Dorsolateral prefrontal cortex (tissue), 120 donors: ENCODE measurements at regions of chr17 and their contacts with region 1.

Region 1: DNA sequence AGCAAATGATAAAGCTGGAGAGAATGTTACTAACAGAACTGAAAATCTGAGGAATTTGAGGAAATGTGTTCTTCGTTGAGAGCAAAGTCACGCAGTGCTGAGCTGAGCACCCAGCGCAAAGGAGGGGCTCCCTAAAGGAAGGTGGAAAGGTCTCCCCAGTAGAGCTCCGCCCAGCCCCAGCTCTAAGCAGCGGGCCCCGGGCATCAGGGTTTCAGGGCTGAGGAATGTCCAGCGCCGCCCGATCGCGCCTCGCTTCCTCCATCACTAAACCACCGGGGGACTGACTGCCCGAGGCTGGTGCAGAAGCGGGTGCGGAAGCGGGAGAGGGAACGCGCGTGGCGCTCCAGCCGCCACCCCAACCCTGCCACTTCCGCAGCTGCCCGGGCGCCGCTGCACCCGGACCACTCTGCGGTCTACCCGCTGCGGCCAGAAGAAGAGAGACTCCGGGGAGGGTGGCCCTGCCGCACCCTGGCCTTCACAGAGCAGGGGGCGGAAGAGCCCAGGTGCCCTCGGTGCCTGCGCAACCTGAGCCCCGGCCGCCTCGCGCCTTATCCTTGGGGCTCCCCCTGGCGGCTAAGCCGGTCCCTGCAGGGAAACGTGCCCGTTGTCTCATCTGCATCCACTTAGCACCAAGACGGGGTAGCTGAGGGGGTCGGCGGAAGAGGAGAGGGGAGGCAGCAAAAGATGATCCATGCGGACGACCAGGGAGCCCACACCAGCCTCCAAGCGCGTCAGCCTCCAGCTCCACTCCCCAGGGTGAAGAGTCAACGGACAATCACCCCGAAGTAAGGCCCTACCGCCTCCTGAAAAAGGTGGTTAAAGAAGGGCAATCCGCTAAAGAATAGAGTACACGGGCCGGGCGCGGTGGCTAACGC is 12.4 kb upstream of the GUCY2D start:
- DNase-seq: peak; percentile 66 to 89 (median 86)
- H3K4me3 ChIP-seq: peak overlapping the region; percentile 49 to 88 (median 67)
- H3K27ac ChIP-seq: peak overlapping the region in 55 of 59 donors; percentile 8 to 91 (median 79)
- H3K27me3 ChIP-seq: peaks cover 0 to 4% (median 0%) of the 10 kb centered on the region in 45 donors
- CTCF ChIP-seq: peak in 55 of 56 donors; percentile 83 to 99 (median 95)

Region 2: DNA sequence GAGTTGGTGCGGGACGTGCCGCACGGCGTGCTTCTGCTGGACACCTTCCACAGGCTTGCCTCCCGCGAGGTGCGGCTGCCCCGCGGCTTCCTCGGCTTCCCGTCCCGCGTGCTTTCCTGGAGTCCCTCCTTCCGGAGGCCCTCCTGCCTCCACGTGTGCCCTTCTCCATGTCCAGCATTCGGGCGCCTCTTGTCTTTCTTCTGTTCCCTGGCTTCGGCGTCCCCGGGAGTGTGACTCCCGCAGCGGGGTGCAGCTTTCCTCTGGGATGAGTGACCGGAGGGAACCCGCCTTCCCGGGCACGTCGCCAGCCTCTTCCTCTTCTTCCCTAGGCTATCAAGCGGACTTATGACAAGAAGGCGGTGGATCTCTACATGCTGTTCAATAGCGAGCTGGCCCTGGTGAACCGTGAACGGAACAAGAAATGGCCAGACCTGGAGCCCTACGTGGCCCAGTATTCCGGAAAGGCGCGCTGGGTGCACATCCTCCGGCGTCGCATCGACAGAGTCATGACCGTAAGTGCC is 249.5 kb before region 1 on chr17:
- intact Hi-C with region 1: loop called in 1 of 2 experiments (anchors 5 kb)
- DNase-seq: no peak
- H3K4me3 ChIP-seq: peak overlapping the region in 12 of 59 donors; percentile 2 to 47 (median 18)
- H3K27ac ChIP-seq: no peak overlapping the region
- H3K27me3 ChIP-seq: peaks cover 0 to 7% (median 0%) of the 10 kb centered on the region in 45 donors
- CTCF ChIP-seq: no peak

Region 3: DNA sequence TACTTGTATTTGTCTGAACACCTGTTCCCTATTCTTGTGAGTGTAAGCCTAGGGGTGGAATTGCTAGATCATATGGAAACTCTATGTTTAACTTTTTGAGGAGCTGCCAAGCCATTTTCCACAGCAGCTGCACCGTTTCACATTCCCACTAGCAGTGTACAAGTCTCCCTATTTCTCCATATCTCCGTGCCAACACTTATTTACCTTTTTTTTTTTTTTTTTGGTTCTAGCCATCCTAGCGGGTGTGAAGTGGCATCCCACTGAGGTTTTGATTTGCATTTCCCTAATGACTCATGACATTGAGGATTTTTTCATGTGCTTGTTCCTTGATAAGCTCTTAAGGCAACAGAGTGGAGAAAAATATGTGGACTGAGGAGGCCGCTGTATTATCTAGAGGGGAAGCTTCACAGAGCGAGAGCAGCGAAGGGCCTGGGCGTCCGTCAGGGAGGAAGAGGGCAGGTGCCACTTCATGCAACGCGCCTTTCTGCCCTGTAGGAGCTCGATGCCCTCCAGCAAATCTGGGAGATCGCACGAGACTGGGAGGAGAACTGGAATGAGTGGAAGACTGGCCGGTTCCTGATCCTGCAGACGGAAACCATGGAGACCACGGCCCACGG is 222.5 kb before region 1 on chr17:
- intact Hi-C with region 1: no loop called
- DNase-seq: peak in 2 of 10 donors; percentile 6 to 32
- H3K4me3 ChIP-seq: peak overlapping the region in 5 of 59 donors; percentile 3 to 17 (median 13)
- H3K27ac ChIP-seq: peak overlapping the region in 1 of 59 donors; percentile 53
- H3K27me3 ChIP-seq: peaks cover 0 to 7% (median 0%) of the 10 kb centered on the region in 45 donors
- CTCF ChIP-seq: no peak

Region 4: GRCh38 chr17:7823581-7824397 is 166.2 kb before region 1 on chr17:
- intact Hi-C with region 1: loop called in 1 of 2 experiments (anchors 5 kb)
- DNase-seq: peak in 1 of 10 donors; percentile 32
- H3K4me3 ChIP-seq: no peak overlapping the region
- H3K27ac ChIP-seq: peak overlapping the region in 1 of 59 donors; percentile 61
- H3K27me3 ChIP-seq: no peaks in the 10 kb centered on the region
- CTCF ChIP-seq: no peak

Region 5: DNA sequence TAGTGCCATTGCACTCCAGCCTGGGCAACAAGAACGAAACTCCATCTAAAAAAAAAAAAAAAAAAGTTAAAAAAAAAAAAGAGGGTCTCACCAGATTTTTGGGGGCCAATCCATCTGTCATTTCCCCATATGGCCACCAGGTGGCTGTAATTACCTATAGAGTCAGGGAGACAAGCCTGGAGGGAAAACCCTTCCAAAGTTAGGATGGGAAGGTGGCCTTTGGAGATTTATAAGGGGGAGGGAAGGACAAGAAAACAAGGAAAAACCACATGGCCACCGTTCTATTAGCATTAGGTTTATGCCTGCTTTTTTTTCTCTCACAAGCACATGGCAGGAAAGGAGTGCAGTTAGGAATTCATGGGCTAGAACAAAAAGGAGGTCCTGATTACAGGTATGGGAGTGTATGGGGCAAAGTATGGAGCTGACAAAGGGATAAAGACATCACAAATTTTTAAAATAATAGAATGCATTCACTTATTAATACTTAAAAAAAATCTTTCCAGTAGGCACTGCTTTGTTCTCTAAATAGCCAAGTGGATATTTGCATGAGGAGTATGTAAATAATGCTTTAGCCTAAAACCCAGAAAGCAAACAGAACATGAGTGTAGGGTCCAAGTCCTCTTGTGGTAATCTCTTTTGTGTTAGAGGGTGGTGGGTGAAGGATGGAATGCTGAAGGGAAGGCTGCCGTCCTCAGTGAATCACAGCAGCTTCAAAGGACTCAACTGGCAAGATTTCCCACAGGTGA is 127.2 kb before region 1 on chr17:
- intact Hi-C with region 1: loop called (anchors 2 kb)
- DNase-seq: peak in 3 of 10 donors; percentile 28 to 55 (median 53)
- H3K4me3 ChIP-seq: no peak overlapping the region
- H3K27ac ChIP-seq: no peak overlapping the region
- H3K27me3 ChIP-seq: no peaks in the 10 kb centered on the region
- CTCF ChIP-seq: peak; percentile 63 to 95 (median 86)

Region 6: DNA sequence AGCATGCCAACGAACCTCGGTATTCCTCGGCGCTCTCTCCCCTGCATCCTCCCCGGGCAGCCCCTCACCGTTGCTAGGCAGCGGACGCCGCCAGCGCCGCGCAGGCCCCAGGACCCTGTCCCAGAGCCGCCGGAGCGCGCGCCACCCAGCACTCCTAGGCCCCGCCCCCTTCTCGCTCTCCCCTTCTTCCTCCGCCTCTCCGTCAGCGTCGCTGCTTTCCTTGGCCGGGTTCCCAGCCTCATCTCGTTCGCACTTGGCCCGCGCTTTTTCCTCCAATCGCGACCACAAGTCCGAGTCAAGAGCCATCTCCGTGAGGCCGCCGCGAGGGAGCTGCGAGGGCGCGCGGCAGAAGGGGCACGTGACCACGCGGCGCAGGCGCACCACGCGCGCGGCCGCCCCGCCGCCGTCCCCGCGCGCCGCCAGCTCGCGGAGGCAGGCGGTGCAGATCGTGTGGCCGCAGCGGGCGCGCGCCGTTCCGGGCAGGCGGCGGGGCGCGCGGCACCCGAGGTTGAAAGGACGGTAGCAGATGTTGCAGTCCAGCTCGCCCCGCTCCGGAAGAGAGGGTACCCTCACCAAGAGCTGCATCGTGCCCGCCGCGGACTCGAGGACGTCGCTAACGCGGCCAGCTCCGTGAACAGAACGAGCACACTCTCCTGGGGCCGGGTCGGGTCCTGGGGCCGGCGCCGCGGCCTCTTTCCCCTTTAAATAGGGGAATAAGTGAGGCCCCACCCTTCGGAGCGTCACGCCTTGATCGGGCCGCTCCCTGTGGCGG is 74.2 kb before region 1 on chr17 and contains the start of gene RNF227:
- intact Hi-C with region 1: loop called (anchors 1 to 2 kb)
- DNase-seq: peak; percentile 70 to 90 (median 84)
- H3K4me3 ChIP-seq: peak within 1 kb of the TSS; percentile 57 to 97 (median 80)
- H3K27ac ChIP-seq: peak within 1 kb of the TSS; percentile 91 to 100 (median 98)
- H3K27me3 ChIP-seq: no peaks in the 10 kb centered on the region
- CTCF ChIP-seq: peak in 24 of 56 donors; percentile 5 to 56 (median 26)
- total RNA-seq, gene RNF227: 3.8 to 10.7 (median 6.7) TPM

Region 7: GRCh38 chr17:7931709-7932482 is 58.1 kb before region 1 on chr17 and contains the starts of genes CNTROB and TRAPPC1:
- intact Hi-C with region 1: loop called (anchors 5 kb)
- DNase-seq: peak; percentile 99 to 100 (median 100)
- H3K4me3 ChIP-seq: peak within 1 kb of the TSS; percentile 73 to 99 (median 89)
- H3K27ac ChIP-seq: peak within 1 kb of the TSS in 53 of 59 donors; percentile 6 to 93 (median 75)
- H3K27me3 ChIP-seq: no peaks in the 10 kb centered on the region
- CTCF ChIP-seq: peak in 23 of 56 donors; percentile 10 to 51 (median 23)
- total RNA-seq, gene CNTROB: 13.4 to 35.9 (median 20.7) TPM
- total RNA-seq, gene TRAPPC1: 58.5 to 141 (median 98.0) TPM

Region 8: GRCh38 chr17:8057691-8058114 is 67.7 kb after region 1 on chr17:
- intact Hi-C with region 1: loop called (anchors 2 to 5 kb)
- DNase-seq: peak in 7 of 10 donors; percentile 25 to 58 (median 48)
- H3K4me3 ChIP-seq: peak overlapping the region in 4 of 59 donors; percentile 1 to 35 (median 11)
- H3K27ac ChIP-seq: no peak overlapping the region
- H3K27me3 ChIP-seq: peaks cover 0 to 53% (median 34%) of the 10 kb centered on the region in 45 donors
- CTCF ChIP-seq: peak; percentile 56 to 93 (median 80)